OCI-LY7 (cell line): ENCODE measurements at regions of chr4 and their contacts with region 1.

Region 1: DNA sequence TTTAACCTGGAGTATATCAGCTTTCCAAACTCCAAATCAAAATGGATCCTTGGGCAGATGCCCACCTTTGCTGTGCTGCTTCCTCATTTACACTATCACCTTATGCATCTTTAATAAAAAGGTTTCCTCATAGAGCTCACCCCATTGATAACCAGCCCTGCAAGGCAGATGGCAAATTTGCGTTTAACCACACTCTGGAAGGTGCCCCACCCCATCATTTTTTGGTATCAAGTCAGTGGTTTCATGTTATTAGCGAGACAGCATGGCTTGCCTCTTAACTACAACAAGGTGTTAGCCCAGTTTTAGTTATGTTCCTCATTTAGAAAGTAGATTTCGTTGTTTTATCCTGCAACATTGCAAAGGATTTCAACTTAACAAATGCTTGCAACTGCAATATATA is 214.0 kb upstream of the WDFY3 start:
- DNase-seq: no peak
- H3K4me3 ChIP-seq: no peak overlapping the region
- H3K27ac ChIP-seq: no peak overlapping the region
- H3K4me1 ChIP-seq: no peaks in the 10 kb centered on the region
- CTCF ChIP-seq: no peak

Region 2: DNA sequence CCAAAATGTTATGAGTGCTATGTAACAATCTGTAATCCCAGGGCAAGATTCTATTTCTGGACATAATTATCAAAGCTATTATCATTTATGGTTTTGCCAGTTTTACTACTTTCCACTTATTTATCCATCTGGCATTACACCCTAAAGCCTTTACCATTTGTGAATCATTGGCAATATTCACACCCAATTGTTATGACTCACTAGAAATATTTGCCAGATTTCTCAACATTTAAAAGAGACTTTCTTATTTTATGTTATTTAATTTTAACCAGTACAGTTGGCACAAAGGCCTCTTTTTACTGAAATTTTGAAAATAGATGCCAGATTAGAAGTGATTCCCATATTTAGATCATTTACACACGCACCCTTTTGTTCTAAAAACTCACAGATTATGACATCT is 28.6 kb after region 1 on chr4:
- CTCF ChIA-PET with region 1: no interaction called
- POLR2A ChIA-PET with region 1: no interaction called
- intact Hi-C with region 1: loop called (anchors 1 kb)
- DNase-seq: no peak
- H3K4me3 ChIP-seq: no peak overlapping the region
- H3K27ac ChIP-seq: no peak overlapping the region
- H3K4me1 ChIP-seq: no peaks in the 10 kb centered on the region
- CTCF ChIP-seq: no peak